Activated CD8-positive, alpha-beta memory T cell treated with anti-CD3 and anti-CD28 coated beads, Interleukin-2, amount 10 ng/mL, durations not matched to agents 7 days and 5 days (primary cell): ENCODE measurements at regions of chr22 and their contacts with region 1.

Region 1: DNA sequence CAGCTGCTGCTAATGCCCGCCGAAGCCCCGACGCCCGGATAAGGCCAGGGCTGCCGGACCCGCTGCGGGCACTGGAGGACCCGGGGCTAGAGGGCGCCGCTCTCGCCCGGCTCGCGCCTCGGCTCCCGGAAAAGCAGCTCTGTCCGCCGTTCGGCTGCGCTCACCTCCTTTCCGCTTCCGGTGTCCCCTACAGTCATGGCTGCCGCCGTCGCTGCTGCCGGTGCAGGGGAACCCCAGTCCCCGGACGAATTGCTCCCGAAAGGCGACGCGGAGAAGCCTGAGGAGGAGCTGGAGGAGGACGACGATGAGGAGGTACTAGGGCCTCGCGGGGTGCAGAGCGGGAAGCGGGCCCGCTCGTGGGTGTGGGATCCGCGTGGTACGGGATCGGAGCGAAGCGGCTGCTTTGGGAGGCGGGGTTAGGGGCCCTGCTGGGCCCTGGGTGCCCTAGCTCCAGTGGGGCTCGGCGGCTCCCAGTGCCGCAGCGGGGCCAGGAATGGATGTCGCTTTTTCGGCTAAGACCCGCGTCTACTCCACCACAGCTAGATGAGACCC is at the start of gene TOMM22:
- DNase-seq: peak; percentile 90
- ATAC-seq: peak; percentile 98
- H3K4me3 Mint-ChIP-seq: peak within 1 kb of the TSS; percentile 92
- H3K27ac Mint-ChIP-seq: peak within 1 kb of the TSS; percentile 94
- H3K4me1 Mint-ChIP-seq: peaks cover 19% of the 10 kb centered on the region
- H3K27me3 Mint-ChIP-seq: no peaks in the 10 kb centered on the region
- total RNA-seq, gene TOMM22: 61.1 to 94.9 TPM

Region 2: GRCh38 chr22:38696606-38697424 is 15.0 kb after region 1 on chr22:
- CTCF ChIA-PET with region 1: interaction called, 43 read pairs
- DNase-seq: peak; percentile 69
- ATAC-seq: peak; percentile 21
- H3K4me3 Mint-ChIP-seq: peak overlapping the region; percentile 82
- H3K27ac Mint-ChIP-seq: peak overlapping the region; percentile 94
- H3K4me1 Mint-ChIP-seq: peaks cover 61% of the 10 kb centered on the region
- H3K27me3 Mint-ChIP-seq: no peaks in the 10 kb centered on the region

Region 3: GRCh38 chr22:38705235-38706100 is 23.6 kb after region 1 on chr22 and contains the start of gene GTPBP1:
- CTCF ChIA-PET with region 1: interaction called, 17 read pairs
- DNase-seq: peak; percentile 99
- ATAC-seq: peak; percentile 84
- H3K4me3 Mint-ChIP-seq: peak within 1 kb of the TSS; percentile 99
- H3K27ac Mint-ChIP-seq: peak within 1 kb of the TSS; percentile 93
- H3K4me1 Mint-ChIP-seq: peaks cover 50% of the 10 kb centered on the region
- H3K27me3 Mint-ChIP-seq: no peaks in the 10 kb centered on the region
- total RNA-seq, gene GTPBP1: 116 to 146 TPM